Colonic mucosa (tissue), 4 donors: ENCODE measurements at regions of chr1 and their contacts with region 1.

Region 1: DNA sequence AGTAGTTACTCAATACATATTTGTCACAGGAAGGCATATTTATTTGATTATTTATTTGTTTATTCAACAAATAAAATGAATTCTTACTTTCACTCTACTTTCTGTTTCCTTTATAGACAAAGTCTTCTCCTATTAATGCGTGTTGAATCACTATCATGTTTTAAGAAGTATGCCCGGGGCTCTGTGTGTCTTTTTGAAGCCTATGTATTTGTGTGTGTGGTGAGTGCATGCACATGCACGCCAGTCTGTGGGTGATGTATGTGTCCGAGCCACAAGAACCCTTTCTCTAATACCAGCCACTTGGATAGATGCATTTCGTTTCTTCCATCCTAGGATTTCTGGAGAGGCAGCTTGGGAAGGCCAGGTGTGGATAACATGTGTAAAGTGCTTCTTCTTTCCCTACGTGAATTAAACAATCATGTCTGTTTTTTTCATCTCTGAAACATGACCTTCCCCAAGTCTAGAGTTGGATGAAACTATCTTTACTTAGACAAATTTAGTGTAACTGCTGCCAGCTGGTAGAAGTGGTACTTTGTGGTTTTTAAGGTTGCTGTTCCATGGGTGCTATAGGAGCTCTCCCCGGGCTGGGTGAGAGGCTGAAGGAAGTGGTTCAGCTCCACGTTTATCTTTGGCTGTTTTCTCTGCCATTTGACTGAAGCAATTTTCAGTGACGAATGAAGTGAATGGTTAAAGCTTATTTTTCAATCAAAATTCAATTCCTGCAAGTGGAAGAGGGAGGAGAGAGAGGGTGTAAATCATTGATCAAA is 46.8 kb upstream of the PPM1J start:
- DNase-seq: no peak
- H3K4me3 ChIP-seq: no peak overlapping the region
- H3K27ac ChIP-seq: no peak overlapping the region
- H3K4me1 ChIP-seq: no peaks in the 10 kb centered on the region
- H3K27me3 ChIP-seq: no peaks in the 10 kb centered on the region
- CTCF ChIP-seq: no peak

Region 2: DNA sequence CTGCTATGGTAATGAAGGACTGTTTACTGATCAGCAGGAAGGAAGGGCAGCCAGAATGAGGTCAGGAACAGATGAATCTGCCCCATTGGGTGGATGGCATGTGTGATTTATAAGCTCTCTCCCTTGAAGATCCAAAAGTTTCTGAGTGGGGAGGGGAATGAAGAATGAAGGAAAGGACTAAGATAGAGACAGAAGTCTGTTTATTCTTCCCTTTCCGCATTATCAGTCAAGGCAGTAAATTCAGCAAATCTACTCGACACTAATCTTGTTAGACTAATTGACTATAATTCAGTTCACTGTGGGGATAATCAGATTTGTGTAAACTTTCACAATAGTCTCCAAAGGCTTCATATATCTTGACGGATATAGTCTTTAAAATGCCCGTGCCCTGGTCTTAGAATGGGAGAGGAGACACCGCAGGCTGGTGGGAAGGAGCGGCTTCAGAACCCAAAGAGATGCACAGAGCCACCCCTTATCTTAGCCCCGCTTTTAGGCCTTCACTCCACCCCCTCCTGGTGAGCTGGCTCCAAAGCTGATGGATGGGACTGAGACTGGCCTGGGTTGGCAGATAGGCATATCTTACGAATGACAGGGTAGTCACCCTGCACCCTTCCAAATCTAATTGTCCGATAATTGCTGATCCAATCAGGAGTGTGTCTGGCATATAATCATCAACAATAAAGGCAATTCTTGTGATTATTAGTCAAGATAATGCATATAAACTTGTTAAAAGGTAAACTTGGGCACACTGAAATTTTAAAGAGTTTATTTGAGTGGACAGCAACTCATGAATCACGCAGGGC is 29.2 kb after region 1 on chr1:
- intact Hi-C with region 1: loop called (anchors 2 kb)
- DNase-seq: no peak
- H3K4me3 ChIP-seq: no peak overlapping the region
- H3K27ac ChIP-seq: no peak overlapping the region
- H3K4me1 ChIP-seq: no peaks in the 10 kb centered on the region
- H3K27me3 ChIP-seq: no peaks in the 10 kb centered on the region
- CTCF ChIP-seq: no peak